ENCODE measurements at regions of chr19 and their contacts with region 1.

Region 1: GRCh38 chr19:31054430-31054829 is 294.8 kb downstream of the TSHZ3 start:
- DNase-seq: peak; percentile 79
- ATAC-seq: peak; percentile 100
- H3K4me3 Mint-ChIP-seq: no peak overlapping the region
- H3K27ac Mint-ChIP-seq: no peak overlapping the region
- H3K4me1 Mint-ChIP-seq: peaks cover 15% of the 10 kb centered on the region
- H3K27me3 Mint-ChIP-seq: no peaks in the 10 kb centered on the region
- CTCF ChIP-seq: peak; percentile 50

Region 2: GRCh38 chr19:30669329-30670010 is 385.0 kb before region 1 on chr19:
- CTCF ChIA-PET with region 1: interaction called, 10 read pairs
- POLR2A ChIA-PET with region 1: no interaction called
- DNase-seq: peak; percentile 86
- ATAC-seq: peak; percentile 55
- H3K4me3 Mint-ChIP-seq: peak overlapping the region; percentile 52
- H3K27ac Mint-ChIP-seq: no peak overlapping the region
- H3K4me1 Mint-ChIP-seq: peaks cover 14% of the 10 kb centered on the region
- H3K27me3 Mint-ChIP-seq: no peaks in the 10 kb centered on the region; the same call in 1 of the 2 replicates
- CTCF ChIP-seq: peak; percentile 77

Region 3: DNA sequence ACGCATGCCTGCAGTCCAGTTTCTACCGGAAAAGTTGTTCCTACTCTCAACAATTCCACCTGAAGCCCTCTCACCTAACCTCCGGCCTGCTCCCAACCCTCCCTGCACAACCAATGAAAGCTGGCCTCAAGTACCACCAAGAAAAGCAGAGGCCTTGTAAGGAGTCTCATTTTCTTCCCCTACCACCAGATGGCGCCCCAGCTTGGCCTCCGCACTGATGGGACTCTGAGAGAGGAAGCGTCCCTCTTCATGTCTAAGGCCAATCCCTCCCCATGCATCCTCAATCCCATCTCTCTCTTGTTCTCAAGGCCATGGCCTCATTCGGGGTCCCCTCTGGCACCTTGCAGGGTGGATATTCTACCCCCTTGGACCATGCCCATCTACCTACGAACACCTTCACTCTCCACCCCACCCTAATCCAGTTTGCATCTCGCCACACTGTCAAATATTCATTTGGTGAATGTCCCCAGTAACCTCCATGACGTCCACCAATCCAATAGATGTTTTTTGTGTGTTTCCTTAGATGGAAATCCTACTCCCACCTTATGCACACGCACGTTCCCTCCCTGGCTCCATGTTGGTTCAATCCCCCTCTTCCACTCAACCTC is 269.5 kb before region 1 on chr19:
- CTCF ChIA-PET with region 1: interaction called, 12 read pairs
- POLR2A ChIA-PET with region 1: no interaction called
- DNase-seq: peak; percentile 84
- ATAC-seq: peak; percentile 97
- H3K4me3 Mint-ChIP-seq: no peak overlapping the region
- H3K27ac Mint-ChIP-seq: no peak overlapping the region
- H3K4me1 Mint-ChIP-seq: no peaks in the 10 kb centered on the region
- H3K27me3 Mint-ChIP-seq: no peaks in the 10 kb centered on the region; the same call in 1 of the 2 replicates
- CTCF ChIP-seq: peak; percentile 63

Region 4: GRCh38 chr19:31015778-31016177 is 38.7 kb before region 1 on chr19:
- CTCF ChIA-PET with region 1: no interaction called
- POLR2A ChIA-PET with region 1: no interaction called
- DNase-seq: no peak
- ATAC-seq: no peak
- H3K4me3 Mint-ChIP-seq: no peak overlapping the region
- H3K27ac Mint-ChIP-seq: no peak overlapping the region
- H3K4me1 Mint-ChIP-seq: no peaks in the 10 kb centered on the region
- H3K27me3 Mint-ChIP-seq: peaks cover 10% of the 10 kb centered on the region; the same call in 1 of the 2 replicates
- CTCF ChIP-seq: no peak

Region 5: DNA sequence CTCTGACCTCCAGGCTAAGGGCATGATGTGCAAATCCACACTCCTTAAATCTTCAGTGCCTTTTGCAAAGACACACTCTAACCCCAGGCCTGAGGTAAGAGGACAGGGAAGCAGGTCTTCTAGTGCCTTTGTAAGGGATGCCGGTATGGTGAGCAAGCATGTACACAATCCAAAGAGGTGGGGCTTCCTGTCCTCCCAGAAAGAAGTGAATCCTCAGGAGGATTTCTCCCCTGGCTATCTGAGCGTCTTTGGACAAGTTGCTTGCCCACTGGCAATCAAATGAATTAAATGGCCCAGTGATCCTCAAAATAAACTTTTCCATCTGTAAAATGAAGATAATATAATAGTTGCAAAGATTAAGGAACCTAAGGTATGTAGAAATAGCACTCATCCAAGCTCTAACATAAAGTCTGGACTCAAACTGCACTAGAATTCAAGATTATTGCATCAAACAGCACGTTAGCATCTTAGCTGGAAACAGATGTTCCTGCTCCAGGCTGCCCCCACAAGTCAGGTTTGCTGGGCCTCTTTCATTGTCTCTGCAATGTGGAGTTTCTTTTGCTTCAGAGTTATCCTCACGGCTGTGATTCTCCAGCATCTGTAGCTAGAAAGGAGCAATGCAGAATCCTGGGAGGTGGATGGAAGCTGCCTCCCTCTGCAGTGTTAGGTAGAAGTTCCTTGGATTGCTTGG is 45.2 kb after region 1 on chr19:
- CTCF ChIA-PET with region 1: interaction called, 37 read pairs
- POLR2A ChIA-PET with region 1: no interaction called
- DNase-seq: no peak
- ATAC-seq: no peak
- H3K4me3 Mint-ChIP-seq: no peak overlapping the region
- H3K27ac Mint-ChIP-seq: no peak overlapping the region
- H3K4me1 Mint-ChIP-seq: peaks cover 39% of the 10 kb centered on the region
- H3K27me3 Mint-ChIP-seq: no peaks in the 10 kb centered on the region
- CTCF ChIP-seq: no peak

Region 6: DNA sequence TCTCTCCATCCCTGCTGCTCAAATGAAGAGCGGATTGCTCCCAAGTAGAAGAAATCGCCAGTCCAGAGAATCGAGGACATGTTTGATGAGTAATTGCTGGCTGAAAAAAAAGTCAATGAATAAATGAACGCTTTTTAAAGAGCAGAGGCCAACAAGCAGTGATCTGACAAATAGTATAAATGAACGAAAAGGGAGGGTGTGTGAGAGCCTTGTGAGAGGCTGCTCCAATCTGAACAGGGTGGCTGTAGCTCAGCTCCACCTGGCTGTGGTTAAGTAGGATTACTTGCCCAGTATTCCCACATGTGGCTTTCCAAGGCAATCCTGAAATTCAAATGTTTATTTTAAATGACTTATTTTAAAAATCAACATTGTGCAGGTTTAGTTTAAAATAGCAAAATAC is 177.8 kb after region 1 on chr19:
- CTCF ChIA-PET with region 1: interaction called, 30 read pairs
- POLR2A ChIA-PET with region 1: no interaction called
- DNase-seq: no peak
- ATAC-seq: peak; percentile 81
- H3K4me3 Mint-ChIP-seq: no peak overlapping the region
- H3K27ac Mint-ChIP-seq: no peak overlapping the region
- H3K4me1 Mint-ChIP-seq: peaks cover 12% of the 10 kb centered on the region
- H3K27me3 Mint-ChIP-seq: no peaks in the 10 kb centered on the region
- CTCF ChIP-seq: no peak

Region 7: GRCh38 chr19:31356587-31357314 is 302.3 kb after region 1 on chr19:
- CTCF ChIA-PET with region 1: interaction called, 26 read pairs
- POLR2A ChIA-PET with region 1: no interaction called
- DNase-seq: peak; percentile 84
- ATAC-seq: peak; percentile 48
- H3K4me3 Mint-ChIP-seq: peak overlapping the region; percentile 97
- H3K27ac Mint-ChIP-seq: no peak overlapping the region; the same call in 1 of the 2 replicates
- H3K4me1 Mint-ChIP-seq: peaks cover 83% of the 10 kb centered on the region
- H3K27me3 Mint-ChIP-seq: peaks cover 51% of the 10 kb centered on the region
- CTCF ChIP-seq: peak; percentile 51; the same call in 1 of the 2 replicates

Region 8: DNA sequence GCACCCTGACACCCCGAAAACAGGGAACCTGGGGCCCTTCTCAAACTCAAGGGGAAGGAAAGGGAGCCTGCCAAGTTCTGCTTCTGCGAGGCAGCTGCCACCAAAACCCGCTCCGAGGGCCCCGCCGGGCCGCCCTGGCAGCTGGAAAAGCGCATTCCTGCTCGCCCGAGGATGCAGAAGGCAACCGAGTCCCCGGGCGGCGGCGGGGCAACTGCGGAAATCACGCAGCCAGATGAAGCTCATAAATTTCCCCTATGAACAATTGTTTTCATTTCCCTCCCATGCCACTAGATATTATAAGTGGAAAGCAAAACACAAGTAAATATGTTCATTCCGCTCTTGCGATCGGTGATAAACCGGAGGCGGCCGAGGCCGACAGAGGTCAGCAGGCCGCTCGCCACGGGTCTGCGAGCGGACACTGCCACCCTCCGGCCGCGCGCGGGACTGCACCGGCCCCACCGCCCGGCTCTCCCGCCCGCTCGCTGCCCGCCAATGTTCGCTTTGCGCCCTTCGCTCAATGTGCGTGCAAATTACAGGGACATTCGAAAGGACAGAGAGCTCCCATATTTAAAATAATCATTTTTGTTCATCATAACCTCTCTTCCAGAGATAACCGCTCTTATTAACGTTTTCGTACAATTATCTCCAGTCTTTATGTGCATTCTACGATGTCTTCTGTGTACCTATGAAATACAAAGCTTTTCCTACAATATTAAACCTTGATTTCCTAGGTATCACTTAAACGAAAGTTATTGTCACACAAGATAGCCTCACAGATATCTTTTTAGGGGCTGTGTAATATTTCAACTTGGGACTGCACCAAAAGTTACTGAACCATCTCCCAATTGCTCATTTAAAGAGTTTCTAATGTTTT is 1170.2 kb after region 1 on chr19:
- CTCF ChIA-PET with region 1: interaction called, 24 read pairs
- POLR2A ChIA-PET with region 1: no interaction called
- DNase-seq: peak; percentile 69
- ATAC-seq: peak; percentile 78
- H3K4me3 Mint-ChIP-seq: peak overlapping the region; percentile 74
- H3K27ac Mint-ChIP-seq: no peak overlapping the region
- H3K4me1 Mint-ChIP-seq: peaks cover 5% of the 10 kb centered on the region; the same call in 1 of the 2 replicates
- H3K27me3 Mint-ChIP-seq: peaks cover 33% of the 10 kb centered on the region
- CTCF ChIP-seq: peak; percentile 98